BJ (cell line): ENCODE measurements at regions of chr14 and their contacts with region 1.

Region 1: GRCh38 chr14:73503648-73504047 is 12.9 kb downstream of the RIOX1 start:
- DNase-seq: no peak
- H3K4me3 ChIP-seq: no peak overlapping the region
- H3K27me3 ChIP-seq: no peaks in the 10 kb centered on the region
- CTCF ChIP-seq: no peak

Region 2: DNA sequence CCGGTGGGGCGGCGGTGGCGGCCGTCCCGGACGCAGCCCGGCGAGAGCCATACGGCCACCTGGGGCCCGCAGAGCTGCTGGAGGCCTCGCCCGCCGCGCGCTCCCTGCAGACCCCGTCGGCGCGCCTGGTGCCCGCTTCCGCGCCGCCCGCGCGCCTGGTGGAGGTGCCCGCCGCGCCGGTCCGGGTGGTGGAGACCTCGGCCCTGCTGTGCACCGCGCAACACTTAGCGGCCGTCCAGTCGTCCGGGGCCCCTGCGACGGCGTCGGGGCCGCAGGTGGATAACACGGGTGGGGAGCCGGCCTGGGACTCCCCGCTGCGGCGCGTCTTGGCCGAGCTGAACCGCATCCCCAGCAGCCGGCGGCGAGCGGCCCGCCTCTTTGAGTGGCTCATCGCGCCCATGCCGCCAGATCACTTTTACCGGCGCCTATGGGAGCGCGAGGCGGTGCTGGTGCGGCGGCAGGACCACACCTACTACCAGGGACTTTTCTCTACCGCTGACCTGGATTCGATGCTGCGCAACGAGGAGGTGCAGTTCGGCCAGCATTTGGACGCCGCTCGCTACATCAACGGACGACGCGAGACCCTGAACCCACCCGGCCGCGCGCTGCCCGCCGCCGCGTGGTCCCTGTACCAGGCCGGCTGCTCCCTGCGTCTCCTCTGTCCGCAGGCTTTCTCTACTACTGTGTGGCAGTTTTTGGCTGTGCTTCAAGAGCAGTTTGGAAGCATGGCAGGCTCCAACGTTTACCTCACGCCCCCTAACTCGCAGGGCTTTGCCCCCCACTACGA is 12.2 kb before region 1 on chr14:
- CTCF ChIA-PET with region 1: interaction called, 14 read pairs
- POLR2A ChIA-PET with region 1: no interaction called
- DNase-seq: no peak
- H3K4me3 ChIP-seq: peak overlapping the region; percentile 76
- H3K27me3 ChIP-seq: no peaks in the 10 kb centered on the region
- CTCF ChIP-seq: no peak

Region 3: GRCh38 chr14:73521229-73521628 is 17.6 kb after region 1 on chr14:
- CTCF ChIA-PET with region 1: interaction called, 56 read pairs
- POLR2A ChIA-PET with region 1: no interaction called
- DNase-seq: no peak
- H3K4me3 ChIP-seq: no peak overlapping the region
- H3K27me3 ChIP-seq: peaks cover 1% of the 10 kb centered on the region; the same call in 1 of the 2 replicates
- CTCF ChIP-seq: no peak

Region 4: GRCh38 chr14:73526569-73526968 is 22.9 kb after region 1 on chr14:
- CTCF ChIA-PET with region 1: interaction called, 56 read pairs
- POLR2A ChIA-PET with region 1: no interaction called
- DNase-seq: no peak
- H3K4me3 ChIP-seq: no peak overlapping the region
- H3K27me3 ChIP-seq: no peaks in the 10 kb centered on the region
- CTCF ChIP-seq: no peak

Region 5: DNA sequence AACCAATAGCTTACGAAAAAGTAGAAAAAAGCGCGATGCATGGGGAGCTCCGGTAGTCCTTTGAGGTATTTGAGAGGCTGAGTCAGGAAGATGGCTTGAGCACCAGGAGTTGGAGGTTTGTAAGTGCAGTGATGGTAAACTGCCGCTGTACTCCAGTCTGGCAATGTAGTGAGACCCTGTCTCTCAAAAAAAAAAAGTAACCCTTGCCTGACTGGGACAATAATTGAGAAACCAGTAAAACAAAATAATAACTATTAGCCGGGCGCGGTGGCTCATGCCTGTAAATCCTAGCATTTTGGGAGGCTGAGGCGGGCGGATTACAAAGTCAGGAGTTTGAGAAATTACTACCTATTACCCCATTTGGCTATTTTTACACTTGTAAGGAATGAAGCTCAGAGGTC is 64.7 kb after region 1 on chr14:
- CTCF ChIA-PET with region 1: interaction called, 38 read pairs
- POLR2A ChIA-PET with region 1: no interaction called
- DNase-seq: no peak
- H3K4me3 ChIP-seq: peak overlapping the region; percentile 50
- H3K27me3 ChIP-seq: no peaks in the 10 kb centered on the region
- CTCF ChIP-seq: no peak

Region 6: DNA sequence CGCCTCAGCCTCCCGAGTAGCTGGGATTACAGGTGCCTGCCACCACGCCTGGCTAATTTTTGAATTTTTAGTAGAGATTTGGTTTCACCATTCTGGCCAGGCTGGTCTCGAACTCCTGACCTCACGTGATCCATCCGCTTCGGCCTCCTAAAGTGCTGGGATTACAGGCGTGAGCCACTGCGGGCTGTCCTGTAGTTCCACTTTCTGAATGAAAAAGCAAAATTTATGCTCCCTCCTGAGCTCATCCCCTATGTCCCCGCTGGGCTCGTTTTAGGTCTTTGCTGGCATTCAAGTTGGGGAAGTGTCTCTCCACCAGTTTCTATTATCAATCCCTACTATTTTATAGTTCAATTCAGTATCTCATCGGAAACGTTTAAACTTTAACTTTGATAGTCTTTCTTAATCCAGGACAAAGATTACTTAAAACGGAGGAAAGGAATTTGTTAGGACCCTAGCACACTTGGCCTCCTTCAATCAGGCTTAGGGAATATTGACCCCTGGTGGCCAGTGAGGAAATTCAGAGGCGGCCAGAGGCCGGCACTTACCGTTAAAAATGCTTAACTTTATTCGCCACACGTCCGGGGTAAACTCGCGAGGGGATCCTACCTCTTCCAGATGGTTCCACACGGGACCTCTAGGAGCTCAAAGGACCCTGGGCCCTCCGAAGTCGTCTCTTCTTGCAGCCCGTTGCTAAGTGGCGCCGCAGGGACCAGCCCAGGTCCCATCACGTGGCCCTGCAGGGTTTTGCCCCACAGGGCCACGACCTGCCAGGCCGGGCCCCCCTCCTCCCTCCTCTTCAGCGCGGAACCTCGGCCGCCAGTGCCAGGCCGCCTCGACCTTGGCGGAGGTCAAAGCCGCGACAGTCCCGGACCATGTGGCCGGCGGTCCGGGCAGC is 129.7 kb after region 1 on chr14:
- CTCF ChIA-PET with region 1: interaction called, 102 read pairs
- POLR2A ChIA-PET with region 1: no interaction called
- DNase-seq: peak; percentile 9
- H3K4me3 ChIP-seq: peak overlapping the region; percentile 28
- H3K27me3 ChIP-seq: no peaks in the 10 kb centered on the region
- CTCF ChIP-seq: peak; percentile 86